ENCODE measurements at regions of chr6 and their contacts with region 1.

Region 1: DNA sequence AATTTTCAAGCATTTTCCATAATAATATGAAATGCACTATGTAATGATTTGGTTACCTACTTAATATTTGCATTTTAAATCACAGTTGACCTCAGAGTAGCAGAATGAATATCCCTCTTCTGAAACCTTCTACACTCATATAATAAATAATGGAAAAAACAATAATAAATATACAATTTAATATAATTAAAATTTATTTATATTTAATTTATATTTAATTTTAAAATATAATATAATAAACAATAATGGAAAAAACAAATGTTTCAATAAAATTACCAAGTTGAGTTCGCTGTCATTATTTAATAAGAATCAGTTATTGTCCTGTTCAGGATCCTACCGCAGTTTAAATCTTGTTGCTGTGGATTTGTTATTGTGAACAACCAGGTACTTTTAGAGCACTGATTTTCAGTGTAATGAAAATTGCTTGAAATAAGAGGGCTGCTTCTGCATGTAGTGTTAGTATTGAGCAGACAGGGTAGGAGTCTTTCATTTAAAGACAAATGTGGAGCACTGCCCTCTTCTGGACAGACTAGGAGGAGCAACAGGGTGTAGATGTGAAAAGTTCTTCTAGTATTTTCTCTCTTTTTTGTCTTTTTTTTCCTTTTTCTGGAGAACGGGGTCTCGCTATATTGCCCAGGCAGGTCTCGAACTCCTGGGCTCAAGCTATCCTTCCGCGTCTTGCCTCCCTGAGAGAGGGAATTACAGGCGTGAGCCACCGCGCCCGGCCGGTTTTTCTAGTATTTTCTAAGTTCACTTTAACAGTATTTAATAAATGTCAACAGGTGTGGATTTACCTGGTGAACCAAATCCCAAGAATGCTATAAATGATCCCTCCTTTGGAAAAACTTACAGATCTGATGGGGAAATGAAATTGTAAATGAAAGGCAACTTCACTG is 13.6 kb downstream of the TRAPPC3L start:
- DNase-seq: peak; percentile 64
- H3K4me3 Mint-ChIP-seq: no peak overlapping the region
- H3K27ac Mint-ChIP-seq: no peak overlapping the region
- H3K4me1 Mint-ChIP-seq: no peaks in the 10 kb centered on the region
- H3K27me3 Mint-ChIP-seq: peaks cover 12% of the 10 kb centered on the region

Region 2: GRCh38 chr6:116244284-116244683 is 287.6 kb before region 1 on chr6:
- CTCF ChIA-PET with region 1: no interaction called
- POLR2A ChIA-PET with region 1: no interaction called
- intact Hi-C with region 1: no loop called
- DNase-seq: no peak
- H3K4me3 Mint-ChIP-seq: no peak overlapping the region
- H3K27ac Mint-ChIP-seq: no peak overlapping the region
- H3K4me1 Mint-ChIP-seq: peaks cover 10% of the 10 kb centered on the region
- H3K27me3 Mint-ChIP-seq: no peaks in the 10 kb centered on the region

Region 3: GRCh38 chr6:116268589-116269293 is 263.2 kb before region 1 on chr6:
- CTCF ChIA-PET with region 1: interaction called, 12 read pairs
- POLR2A ChIA-PET with region 1: no interaction called
- intact Hi-C with region 1: loop called (anchors 1 kb)
- DNase-seq: no peak
- H3K4me3 Mint-ChIP-seq: no peak overlapping the region
- H3K27ac Mint-ChIP-seq: peak overlapping the region; percentile 4
- H3K4me1 Mint-ChIP-seq: peaks cover 23% of the 10 kb centered on the region
- H3K27me3 Mint-ChIP-seq: no peaks in the 10 kb centered on the region

Region 4: DNA sequence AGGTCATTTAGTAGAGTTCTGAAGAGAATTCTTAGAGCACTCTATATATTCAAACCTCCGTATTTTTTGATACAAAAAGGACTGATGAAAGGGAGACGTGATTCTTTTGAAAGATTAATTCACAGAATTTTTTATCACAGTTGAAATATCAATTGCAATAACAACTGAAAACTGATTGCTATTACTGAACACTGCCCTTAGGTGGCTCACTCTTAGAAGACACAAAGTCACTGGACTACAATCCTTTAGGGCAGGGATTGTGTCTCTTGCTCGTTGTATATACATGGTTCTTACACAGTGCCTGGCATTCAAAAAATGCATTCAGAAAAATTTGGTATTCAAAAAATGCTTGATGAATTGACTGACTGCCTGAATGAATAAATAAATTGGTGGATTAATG is 87.8 kb before region 1 on chr6:
- CTCF ChIA-PET with region 1: interaction called, 16 read pairs
- POLR2A ChIA-PET with region 1: no interaction called
- intact Hi-C with region 1: loop called (anchors 1 kb)
- DNase-seq: no peak
- H3K4me3 Mint-ChIP-seq: no peak overlapping the region
- H3K27ac Mint-ChIP-seq: no peak overlapping the region
- H3K4me1 Mint-ChIP-seq: peaks cover 7% of the 10 kb centered on the region
- H3K27me3 Mint-ChIP-seq: peaks cover 9% of the 10 kb centered on the region

Region 5: GRCh38 chr6:116542426-116542825 is 10.5 kb after region 1 on chr6:
- CTCF ChIA-PET with region 1: interaction called, 12 read pairs
- POLR2A ChIA-PET with region 1: no interaction called
- intact Hi-C with region 1: no loop called
- DNase-seq: no peak
- H3K4me3 Mint-ChIP-seq: no peak overlapping the region
- H3K27ac Mint-ChIP-seq: no peak overlapping the region
- H3K4me1 Mint-ChIP-seq: no peaks in the 10 kb centered on the region
- H3K27me3 Mint-ChIP-seq: peaks cover 15% of the 10 kb centered on the region

Region 6: GRCh38 chr6:116648156-116648555 is 116.2 kb after region 1 on chr6:
- CTCF ChIA-PET with region 1: interaction called, 8 read pairs
- POLR2A ChIA-PET with region 1: no interaction called
- intact Hi-C with region 1: loop called (anchors 1 kb)
- DNase-seq: no peak
- H3K4me3 Mint-ChIP-seq: no peak overlapping the region
- H3K27ac Mint-ChIP-seq: no peak overlapping the region
- H3K4me1 Mint-ChIP-seq: peaks cover 8% of the 10 kb centered on the region
- H3K27me3 Mint-ChIP-seq: no peaks in the 10 kb centered on the region

Region 7: DNA sequence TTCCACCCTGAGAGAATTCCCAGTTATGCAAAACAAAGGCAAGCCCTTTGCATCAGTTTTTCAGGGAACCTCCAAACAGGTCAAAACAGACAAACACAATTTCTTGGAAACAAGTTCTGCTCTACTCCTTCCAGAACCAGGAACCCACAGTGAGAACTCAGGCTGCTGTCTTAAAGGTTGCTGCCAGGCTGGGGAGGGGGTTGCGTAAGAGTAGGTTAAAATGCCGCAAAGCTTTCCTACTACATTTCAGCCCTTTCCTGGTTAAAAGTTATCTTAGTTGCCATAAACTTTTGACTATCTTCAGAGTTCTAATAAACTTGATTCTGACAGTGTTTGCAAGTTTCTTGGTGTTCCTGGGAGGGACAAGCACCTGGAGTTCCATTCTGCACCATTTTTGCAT is 182.8 kb after region 1 on chr6:
- CTCF ChIA-PET with region 1: no interaction called
- POLR2A ChIA-PET with region 1: no interaction called
- intact Hi-C with region 1: no loop called
- DNase-seq: no peak
- H3K4me3 Mint-ChIP-seq: no peak overlapping the region
- H3K27ac Mint-ChIP-seq: no peak overlapping the region
- H3K4me1 Mint-ChIP-seq: peaks cover 8% of the 10 kb centered on the region
- H3K27me3 Mint-ChIP-seq: no peaks in the 10 kb centered on the region

Measured in activated CD4-positive, alpha-beta memory T cell treated with anti-CD3 and anti-CD28 coated beads for 36 hours (primary cell).